Activated CD4-positive, alpha-beta memory T cell treated with anti-CD3 and anti-CD28 coated beads, Interleukin-2, amount 10 ng/mL, durations not matched to agents 7 days and 5 days (primary cell): ENCODE measurements at regions of chr15 and their contacts with region 1.

Region 1: DNA sequence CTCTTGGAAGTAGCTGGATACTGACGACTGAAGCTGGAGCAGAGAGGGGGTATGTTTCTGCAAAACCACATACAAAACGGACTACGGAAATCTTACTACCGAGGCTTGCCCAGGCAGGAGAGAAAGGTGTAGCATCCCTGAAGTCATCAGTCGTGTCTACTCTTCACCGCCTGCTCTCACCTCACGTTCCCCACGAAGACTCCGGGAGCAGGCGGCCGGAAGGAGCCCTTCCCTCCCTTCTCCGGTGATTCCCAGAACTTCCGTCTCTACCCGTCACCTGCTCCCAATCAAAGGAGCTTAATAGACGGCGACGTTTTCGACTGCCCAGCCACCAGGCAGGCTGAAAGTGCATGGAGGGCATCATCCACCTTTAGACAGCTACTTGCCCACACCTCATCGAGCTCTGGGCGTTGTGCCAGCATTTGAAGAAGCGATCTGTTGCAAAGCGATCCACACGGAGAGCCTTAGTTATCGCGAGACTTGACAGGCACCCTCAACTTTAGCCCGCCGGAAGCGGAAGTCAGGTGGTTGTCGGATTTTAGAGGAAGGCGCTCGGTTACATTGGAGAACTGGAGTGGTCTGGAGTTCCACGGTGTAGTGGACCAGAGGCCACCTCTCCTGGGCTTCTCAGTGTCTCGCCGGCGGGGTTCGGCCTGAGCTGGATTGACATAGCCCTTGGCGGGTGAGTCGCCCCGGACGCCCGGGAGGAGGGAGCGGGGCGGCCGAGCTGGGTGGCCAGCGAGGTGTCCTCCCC is at the start of gene RAMAC:
- DNase-seq: peak; percentile 93
- H3K4me3 Mint-ChIP-seq: peak within 1 kb of the TSS; percentile 95
- H3K27ac Mint-ChIP-seq: peak within 1 kb of the TSS; percentile 91
- H3K4me1 Mint-ChIP-seq: peaks cover 37% of the 10 kb centered on the region
- H3K27me3 Mint-ChIP-seq: no peaks in the 10 kb centered on the region
- total RNA-seq, gene RAMAC: 24.1 TPM

Region 2: DNA sequence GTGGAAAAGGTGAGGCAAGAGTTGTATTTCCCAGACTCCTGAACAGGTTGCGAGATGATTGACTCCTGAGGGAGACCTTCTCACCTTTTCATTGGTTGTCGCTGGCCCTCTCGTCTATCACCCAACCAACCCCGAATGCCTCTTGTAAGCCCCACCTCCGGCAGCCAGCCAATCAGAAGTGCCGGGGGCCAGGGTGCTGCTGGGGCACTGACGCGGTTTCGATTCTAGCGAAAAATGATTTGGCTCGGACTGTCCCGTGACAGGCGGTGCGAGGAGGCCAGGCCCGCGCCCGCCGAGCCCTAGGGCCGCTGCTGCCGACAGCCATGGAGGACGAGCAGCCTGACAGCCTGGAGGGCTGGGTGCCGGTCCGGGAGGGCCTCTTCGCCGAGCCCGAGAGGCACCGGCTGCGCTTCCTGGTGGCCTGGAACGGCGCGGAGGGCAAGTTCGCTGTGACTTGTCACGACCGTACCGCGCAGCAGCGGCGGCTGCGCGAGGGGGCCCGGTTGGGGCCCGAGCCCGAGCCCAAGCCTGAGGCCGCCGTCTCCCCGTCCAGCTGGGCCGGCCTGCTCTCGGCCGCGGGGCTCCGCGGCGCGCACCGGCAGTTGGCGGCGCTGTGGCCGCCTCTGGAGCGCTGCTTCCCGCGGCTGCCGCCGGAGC is 176.3 kb before region 1 on chr15 and contains the start of gene WHAMM:
- CTCF ChIA-PET with region 1: interaction called, 6 read pairs
- POLR2A ChIA-PET with region 1: interaction called, 29 read pairs
- DNase-seq: peak; percentile 96
- H3K4me3 Mint-ChIP-seq: peak within 1 kb of the TSS; percentile 85
- H3K27ac Mint-ChIP-seq: peak within 1 kb of the TSS; percentile 86
- H3K4me1 Mint-ChIP-seq: peaks cover 31% of the 10 kb centered on the region
- H3K27me3 Mint-ChIP-seq: peaks cover 15% of the 10 kb centered on the region
- total RNA-seq, gene WHAMM: 11.1 to 13.7 TPM

Region 3: DNA sequence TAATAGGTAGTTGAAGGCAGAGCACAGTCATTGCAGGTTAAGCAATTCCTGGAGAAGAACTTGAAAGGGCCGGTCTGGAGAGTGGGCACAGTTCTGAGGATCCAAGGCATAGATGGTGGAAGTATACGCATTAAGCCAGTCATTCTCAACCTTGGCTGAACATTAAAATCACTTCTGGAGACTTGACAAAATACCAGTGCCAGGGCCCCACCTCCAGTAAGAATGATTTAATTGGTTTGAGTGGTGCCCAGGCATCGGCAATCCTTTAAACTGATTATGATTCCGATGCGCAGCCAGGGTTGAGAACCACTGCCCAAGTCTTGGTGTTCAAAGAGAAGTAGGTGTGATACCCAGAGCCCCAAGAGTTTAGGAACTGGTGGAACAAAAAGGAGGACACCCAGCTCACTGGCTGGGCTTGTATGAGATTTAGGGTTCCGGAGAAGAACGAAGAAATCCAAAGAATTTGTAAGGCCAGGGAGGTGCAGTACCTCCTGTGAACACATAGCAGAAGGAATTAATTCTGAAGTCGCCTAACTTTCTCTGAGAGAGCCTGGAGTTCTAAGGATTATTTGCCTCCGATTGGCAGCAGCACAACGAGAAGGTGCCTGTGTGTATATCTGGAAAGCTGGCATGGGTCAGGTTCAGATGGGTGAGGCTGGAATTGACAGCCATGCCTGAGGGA is 26.3 kb before region 1 on chr15:
- CTCF ChIA-PET with region 1: interaction called, 4 read pairs
- POLR2A ChIA-PET with region 1: interaction called, 13 read pairs
- DNase-seq: no peak
- H3K4me3 Mint-ChIP-seq: no peak overlapping the region
- H3K27ac Mint-ChIP-seq: no peak overlapping the region
- H3K4me1 Mint-ChIP-seq: no peaks in the 10 kb centered on the region
- H3K27me3 Mint-ChIP-seq: peaks cover 35% of the 10 kb centered on the region

Region 4: GRCh38 chr15:82999905-83000671 is 14.2 kb after region 1 on chr15:
- CTCF ChIA-PET with region 1: interaction called, 22 read pairs
- POLR2A ChIA-PET with region 1: interaction called, 5 read pairs
- DNase-seq: peak; percentile 44
- H3K4me3 Mint-ChIP-seq: peak overlapping the region; percentile 57
- H3K27ac Mint-ChIP-seq: no peak overlapping the region
- H3K4me1 Mint-ChIP-seq: peaks cover 8% of the 10 kb centered on the region
- H3K27me3 Mint-ChIP-seq: no peaks in the 10 kb centered on the region

Region 5: DNA sequence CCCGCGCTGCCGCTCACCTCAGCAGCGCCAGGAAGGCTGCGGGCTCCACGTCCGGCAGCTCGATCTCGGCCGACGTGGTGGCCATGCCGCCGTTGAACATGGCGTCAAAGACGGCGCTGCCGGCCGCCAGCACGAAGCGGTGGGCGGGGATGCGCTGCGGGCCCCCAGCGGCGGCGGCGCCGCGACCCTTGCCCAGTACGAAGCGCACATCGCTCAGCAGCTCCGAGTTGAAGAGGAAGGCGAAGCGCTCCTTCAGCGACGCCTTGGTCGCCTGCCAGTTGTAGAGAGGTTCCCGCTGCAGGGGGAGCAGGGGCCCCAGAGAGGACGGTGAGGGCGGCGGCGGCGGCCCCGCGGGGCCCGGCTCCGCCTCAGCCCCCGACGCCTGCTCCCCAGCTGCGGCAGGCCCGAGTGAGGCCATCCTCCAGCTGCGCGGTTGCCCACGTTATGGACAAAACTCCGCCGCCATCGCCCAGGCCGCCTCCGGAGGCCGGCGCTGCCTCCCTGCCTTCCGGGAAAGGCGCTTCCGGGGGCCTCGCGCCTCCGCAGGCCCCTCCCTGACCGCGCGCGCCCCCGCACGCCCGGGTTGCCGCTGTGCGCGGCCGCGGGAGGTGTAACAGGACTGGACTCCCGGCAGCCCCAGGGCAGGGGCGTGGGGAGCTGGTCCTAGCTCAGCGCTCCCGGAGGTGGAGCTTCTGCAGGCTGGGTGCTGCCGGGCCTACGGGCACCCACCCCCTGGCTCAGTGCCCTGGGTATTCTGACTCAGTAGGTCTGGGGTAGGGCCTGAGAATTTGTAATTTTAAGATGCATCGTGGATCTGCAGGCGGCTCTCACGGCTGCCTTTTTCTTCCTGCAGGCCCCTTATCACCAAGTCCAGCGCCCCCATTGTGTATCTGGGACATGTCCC is 81.1 kb after region 1 on chr15 and contains the start of gene BTBD1:
- CTCF ChIA-PET with region 1: interaction called, 4 read pairs
- POLR2A ChIA-PET with region 1: interaction called, 14 read pairs
- DNase-seq: peak; percentile 87
- H3K4me3 Mint-ChIP-seq: peak within 1 kb of the TSS; percentile 49
- H3K27ac Mint-ChIP-seq: peak within 1 kb of the TSS; percentile 76
- H3K4me1 Mint-ChIP-seq: peaks cover 20% of the 10 kb centered on the region
- H3K27me3 Mint-ChIP-seq: no peaks in the 10 kb centered on the region
- total RNA-seq, gene BTBD1: 55.0 to 58.6 TPM